Activated CD4-positive, alpha-beta memory T cell treated with anti-CD3 and anti-CD28 coated beads for 36 hours (primary cell): ENCODE measurements at regions of chr12 and their contacts with region 1.

Region 1: GRCh38 chr12:110883251-110883650 is 36.5 kb downstream of the CCDC63 start:
- DNase-seq: no peak
- H3K4me3 Mint-ChIP-seq: no peak overlapping the region
- H3K27ac Mint-ChIP-seq: no peak overlapping the region
- H3K4me1 Mint-ChIP-seq: peaks cover 4% of the 10 kb centered on the region
- H3K27me3 Mint-ChIP-seq: peaks cover 3% of the 10 kb centered on the region

Region 2: GRCh38 chr12:110896559-110896958 is 13.3 kb after region 1 on chr12:
- CTCF ChIA-PET with region 1: interaction called, 12 read pairs
- POLR2A ChIA-PET with region 1: no interaction called
- intact Hi-C with region 1: no loop called
- DNase-seq: no peak
- H3K4me3 Mint-ChIP-seq: no peak overlapping the region
- H3K27ac Mint-ChIP-seq: no peak overlapping the region
- H3K4me1 Mint-ChIP-seq: peaks cover 2% of the 10 kb centered on the region
- H3K27me3 Mint-ChIP-seq: peaks cover 14% of the 10 kb centered on the region